ENCODE measurements at regions of chr6 and their contacts with region 1.

Region 1: GRCh38 chr6:89675949-89676748 is 37.6 kb upstream of the LYRM2 start:
- DNase-seq: no peak
- ATAC-seq: no peak
- H3K4me3 Mint-ChIP-seq: no peak overlapping the region
- H3K27ac Mint-ChIP-seq: no peak overlapping the region
- H3K4me1 Mint-ChIP-seq: no peaks in the 10 kb centered on the region
- H3K27me3 Mint-ChIP-seq: no peaks in the 10 kb centered on the region
- CTCF ChIP-seq: no peak

Region 2: DNA sequence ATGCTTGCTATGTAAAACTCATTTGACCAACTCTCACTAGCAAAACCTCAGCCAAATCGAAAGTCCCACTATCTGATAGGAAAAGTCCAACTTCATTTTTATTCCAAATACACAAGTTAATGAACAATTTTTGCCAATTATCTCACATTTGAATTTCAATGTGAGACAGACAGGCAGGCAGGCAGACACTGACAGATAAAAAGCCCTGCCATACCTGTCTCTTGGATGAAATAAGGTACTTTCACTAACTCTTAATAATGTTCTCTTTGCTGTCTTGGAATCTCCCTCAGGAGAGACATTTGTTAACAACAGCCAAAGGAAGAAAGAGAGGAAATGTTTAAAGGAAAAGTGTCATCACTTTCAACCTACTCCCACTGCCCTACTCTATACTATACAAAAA is 794.7 kb before region 1 on chr6:
- CTCF ChIA-PET with region 1: no interaction called
- POLR2A ChIA-PET with region 1: interaction called, 16 read pairs
- intact Hi-C with region 1: no loop called
- DNase-seq: no peak
- ATAC-seq: no peak
- H3K4me3 Mint-ChIP-seq: no peak overlapping the region
- H3K27ac Mint-ChIP-seq: no peak overlapping the region
- H3K4me1 Mint-ChIP-seq: no peaks in the 10 kb centered on the region
- H3K27me3 Mint-ChIP-seq: no peaks in the 10 kb centered on the region
- CTCF ChIP-seq: no peak

Region 3: GRCh38 chr6:89411145-89412070 is 264.7 kb before region 1 on chr6:
- CTCF ChIA-PET with region 1: no interaction called
- POLR2A ChIA-PET with region 1: no interaction called
- intact Hi-C with region 1: no loop called
- DNase-seq: peak; percentile 46
- ATAC-seq: peak; percentile 56
- H3K4me3 Mint-ChIP-seq: peak overlapping the region; percentile 85
- H3K27ac Mint-ChIP-seq: no peak overlapping the region
- H3K4me1 Mint-ChIP-seq: peaks cover 21% of the 10 kb centered on the region
- H3K27me3 Mint-ChIP-seq: peaks cover 13% of the 10 kb centered on the region
- CTCF ChIP-seq: no peak

Region 4: DNA sequence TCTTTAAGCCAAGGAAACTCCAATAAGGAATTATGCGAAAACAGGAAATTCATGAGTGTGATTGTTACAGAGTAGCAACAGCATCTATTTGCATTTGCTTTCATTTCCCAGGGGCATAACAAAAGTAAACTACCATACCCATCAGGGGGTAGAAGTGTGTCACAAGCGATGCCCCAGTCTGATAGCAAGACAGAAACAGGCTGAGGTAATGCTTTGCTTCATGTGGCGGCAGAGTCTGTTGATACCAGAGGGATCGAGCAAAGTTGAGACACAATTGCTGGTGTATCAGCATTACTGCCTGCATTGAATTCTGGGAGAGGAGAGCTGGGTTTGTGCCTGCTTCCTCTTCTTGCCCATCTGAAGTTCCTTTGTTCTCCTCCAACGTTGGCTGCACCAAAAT is 13.6 kb after region 1 on chr6:
- CTCF ChIA-PET with region 1: no interaction called
- POLR2A ChIA-PET with region 1: no interaction called
- intact Hi-C with region 1: no loop called
- DNase-seq: no peak
- ATAC-seq: no peak
- H3K4me3 Mint-ChIP-seq: no peak overlapping the region
- H3K27ac Mint-ChIP-seq: no peak overlapping the region
- H3K4me1 Mint-ChIP-seq: peaks cover 12% of the 10 kb centered on the region
- H3K27me3 Mint-ChIP-seq: no peaks in the 10 kb centered on the region
- CTCF ChIP-seq: no peak